ENCODE measurements at regions of chr19 and their contacts with region 1.

Region 1: DNA sequence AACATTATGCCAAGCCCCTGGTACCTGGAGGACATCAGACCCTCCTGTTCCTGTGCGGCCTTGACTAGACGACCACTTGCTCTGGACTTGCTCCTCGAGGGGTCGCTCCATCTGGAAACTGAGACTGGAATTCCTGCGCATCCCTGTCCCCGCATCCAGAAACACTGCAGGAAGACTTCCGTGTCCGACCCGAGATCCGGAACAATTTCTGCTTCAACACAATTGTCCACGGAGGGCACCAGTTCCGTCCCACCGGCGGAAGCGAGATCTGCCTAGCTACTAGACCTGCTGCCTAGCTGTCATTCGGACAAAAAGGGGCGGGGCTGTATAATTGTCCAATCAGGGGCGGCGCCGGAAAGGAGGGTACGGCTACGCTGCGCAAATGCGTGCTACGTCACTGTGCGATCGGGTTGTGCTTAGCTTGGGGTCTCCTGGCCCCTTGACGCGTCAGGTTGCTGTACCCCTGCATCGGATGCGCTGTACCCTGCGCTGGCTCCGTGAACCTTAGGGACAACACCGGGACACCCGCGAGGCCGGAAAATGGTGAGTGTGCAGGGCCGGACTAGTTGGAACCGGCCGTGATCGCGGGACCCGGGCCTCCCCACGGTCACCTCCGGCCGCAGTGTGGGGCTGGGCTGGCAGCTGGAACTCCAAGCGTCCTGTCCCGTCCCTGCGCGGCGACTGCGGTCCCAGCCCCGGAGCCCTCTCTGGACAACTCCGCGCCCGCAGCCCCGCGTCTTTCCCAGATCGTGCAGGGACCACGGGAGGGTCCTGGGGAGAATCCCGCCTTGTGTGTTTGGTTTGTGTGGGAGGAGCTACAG is at the starts of genes ZNF490 and ZNF791:
- DNase-seq: peak; percentile 97
- H3K4me3 ChIP-seq: peak within 1 kb of the TSS; percentile 83 to 97 (median 91)
- H3K27ac ChIP-seq: peak within 1 kb of the TSS; percentile 91
- H3K4me1 ChIP-seq: peaks cover 13% of the 10 kb centered on the region
- H3K27me3 ChIP-seq: no peaks in the 10 kb centered on the region
- CTCF ChIP-seq: peak; percentile 6 to 22
- POLR2A ChIP-seq: peak; percentile 74
- total RNA-seq, gene ZNF490: 5.7 and 6.3 TPM in 2 replicates
- total RNA-seq, gene ZNF791: 19.9 and 21.8 TPM in 2 replicates

Region 2: GRCh38 chr19:12294249-12295158 is 316.2 kb before region 1 on chr19 and contains the start of gene ZNF44:
- CTCF ChIA-PET with region 1: no interaction called
- POLR2A ChIA-PET with region 1: no interaction called
- dilution Hi-C with region 1: no loop called
- intact Hi-C with region 1: loop called (anchors 1 kb)
- DNase-seq: peak; percentile 95
- H3K4me3 ChIP-seq: peak within 1 kb of the TSS; percentile 43 to 91 (median 63)
- H3K27ac ChIP-seq: peak within 1 kb of the TSS; percentile 56
- H3K4me1 ChIP-seq: peaks cover 3% of the 10 kb centered on the region
- H3K27me3 ChIP-seq: no peaks in the 10 kb centered on the region
- CTCF ChIP-seq: no peak
- POLR2A ChIP-seq: peak; percentile 51
- total RNA-seq, gene ZNF44: 5.2 and 7.4 TPM in 2 replicates

Region 3: GRCh38 chr19:12521996-12522395 is 88.8 kb before region 1 on chr19:
- CTCF ChIA-PET with region 1: no interaction called
- POLR2A ChIA-PET with region 1: no interaction called
- dilution Hi-C with region 1: no loop called
- intact Hi-C with region 1: no loop called
- DNase-seq: no peak
- H3K4me3 ChIP-seq: no peak overlapping the region
- H3K27ac ChIP-seq: no peak overlapping the region
- H3K4me1 ChIP-seq: no peaks in the 10 kb centered on the region
- H3K27me3 ChIP-seq: no peaks in the 10 kb centered on the region
- CTCF ChIP-seq: peak in 1 of 2 donors; percentile 12
- POLR2A ChIP-seq: no peak

Region 4: DNA sequence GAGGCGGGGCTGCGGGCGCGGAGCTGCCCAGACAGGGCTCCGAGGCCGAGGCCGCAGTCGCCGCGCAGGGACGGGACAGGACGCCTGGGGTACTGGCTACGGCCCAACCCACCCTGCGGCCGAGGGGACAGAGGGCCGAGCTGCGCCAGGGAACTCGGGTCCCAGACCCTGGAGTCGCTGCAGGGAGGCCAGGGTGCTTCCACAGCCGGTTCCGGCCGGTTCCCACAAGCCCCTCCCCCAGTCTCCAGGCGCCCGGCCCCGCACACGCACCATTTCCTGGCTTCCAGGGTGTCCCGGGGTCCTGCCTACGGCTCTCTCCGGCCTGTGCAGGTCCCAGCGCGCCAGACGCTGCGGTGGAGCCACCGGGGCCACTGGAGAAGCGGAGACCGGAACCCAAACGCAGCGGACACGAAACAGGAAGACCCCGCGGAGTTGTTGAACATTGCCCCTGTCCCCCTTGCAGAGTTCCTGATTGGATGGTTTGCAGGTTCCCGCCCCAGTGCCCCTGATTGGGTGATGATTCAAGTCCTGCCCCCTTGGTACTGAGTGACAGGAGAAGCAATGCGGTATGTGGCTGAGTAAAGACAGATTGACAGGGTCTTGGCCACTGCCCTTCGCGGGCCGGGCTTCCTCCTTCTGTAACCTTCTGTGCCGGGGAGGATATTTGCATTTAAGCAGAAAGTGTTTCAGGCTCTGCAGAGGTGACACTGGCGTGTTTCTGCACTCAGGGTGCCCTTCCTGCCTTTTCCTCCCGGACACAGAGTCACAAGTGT is 59.5 kb before region 1 on chr19 and contains the start of gene ZNF564:
- CTCF ChIA-PET with region 1: interaction called, 4 read pairs
- POLR2A ChIA-PET with region 1: no interaction called
- dilution Hi-C with region 1: no loop called
- intact Hi-C with region 1: loop called (anchors 1 kb)
- DNase-seq: peak; percentile 98
- H3K4me3 ChIP-seq: peak within 1 kb of the TSS; percentile 10 to 64 (median 62)
- H3K27ac ChIP-seq: peak within 1 kb of the TSS; percentile 73
- H3K4me1 ChIP-seq: no peaks in the 10 kb centered on the region
- H3K27me3 ChIP-seq: no peaks in the 10 kb centered on the region
- CTCF ChIP-seq: no peak
- POLR2A ChIP-seq: peak; percentile 71
- total RNA-seq, gene ZNF564: 6.5 and 7.1 TPM in 2 replicates

Region 5: GRCh38 chr19:12666265-12667048 is 55.7 kb after region 1 on chr19 and contains the starts of genes MAN2B1 and WDR83:
- CTCF ChIA-PET with region 1: interaction called, 5 read pairs
- POLR2A ChIA-PET with region 1: no interaction called
- dilution Hi-C with region 1: no loop called
- intact Hi-C with region 1: loop called (anchors 1 kb)
- DNase-seq: peak; percentile 82
- H3K4me3 ChIP-seq: peak within 1 kb of the TSS; percentile 60 to 73 (median 67)
- H3K27ac ChIP-seq: peak within 1 kb of the TSS; percentile 38
- H3K4me1 ChIP-seq: peaks cover 20% of the 10 kb centered on the region
- H3K27me3 ChIP-seq: no peaks in the 10 kb centered on the region
- CTCF ChIP-seq: no peak
- POLR2A ChIP-seq: peak; percentile 49
- total RNA-seq, gene MAN2B1: 73.0 and 76.8 TPM in 2 replicates
- total RNA-seq, gene WDR83: 10.9 and 11.8 TPM in 2 replicates

Region 6: GRCh38 chr19:12881172-12881808 is 270.5 kb after region 1 on chr19 and contains the start of gene DNASE2:
- CTCF ChIA-PET with region 1: no interaction called
- POLR2A ChIA-PET with region 1: interaction called, 10 read pairs
- dilution Hi-C with region 1: no loop called
- intact Hi-C with region 1: no loop called
- DNase-seq: peak; percentile 82
- H3K4me3 ChIP-seq: peak within 1 kb of the TSS; percentile 25 to 78 (median 49)
- H3K27ac ChIP-seq: peak within 1 kb of the TSS; percentile 49
- H3K4me1 ChIP-seq: peaks cover 4% of the 10 kb centered on the region
- H3K27me3 ChIP-seq: peaks cover 9 to 20% of the 10 kb centered on the region in 2 experiments
- CTCF ChIP-seq: no peak
- POLR2A ChIP-seq: peak; percentile 36
- total RNA-seq, gene DNASE2: 31.3 and 34.8 TPM in 2 replicates

Measured in endothelial cell of umbilical vein (primary cell).